A673 (cell line): ENCODE measurements at regions of chr5 and their contacts with region 1.

Region 1: GRCh38 chr5:123423278-123424149 is at the start of gene CEP120:
- DNase-seq: peak; percentile 100
- H3K4me3 ChIP-seq: peak within 1 kb of the TSS; percentile 86
- H3K27ac ChIP-seq: peak within 1 kb of the TSS; percentile 93
- H3K4me1 ChIP-seq: peaks cover 14% of the 10 kb centered on the region
- H3K27me3 ChIP-seq: no peaks in the 10 kb centered on the region
- CTCF ChIP-seq: peak; percentile 95
- total RNA-seq, gene CEP120: 25.5 and 25.7 TPM in 2 replicates

Region 2: DNA sequence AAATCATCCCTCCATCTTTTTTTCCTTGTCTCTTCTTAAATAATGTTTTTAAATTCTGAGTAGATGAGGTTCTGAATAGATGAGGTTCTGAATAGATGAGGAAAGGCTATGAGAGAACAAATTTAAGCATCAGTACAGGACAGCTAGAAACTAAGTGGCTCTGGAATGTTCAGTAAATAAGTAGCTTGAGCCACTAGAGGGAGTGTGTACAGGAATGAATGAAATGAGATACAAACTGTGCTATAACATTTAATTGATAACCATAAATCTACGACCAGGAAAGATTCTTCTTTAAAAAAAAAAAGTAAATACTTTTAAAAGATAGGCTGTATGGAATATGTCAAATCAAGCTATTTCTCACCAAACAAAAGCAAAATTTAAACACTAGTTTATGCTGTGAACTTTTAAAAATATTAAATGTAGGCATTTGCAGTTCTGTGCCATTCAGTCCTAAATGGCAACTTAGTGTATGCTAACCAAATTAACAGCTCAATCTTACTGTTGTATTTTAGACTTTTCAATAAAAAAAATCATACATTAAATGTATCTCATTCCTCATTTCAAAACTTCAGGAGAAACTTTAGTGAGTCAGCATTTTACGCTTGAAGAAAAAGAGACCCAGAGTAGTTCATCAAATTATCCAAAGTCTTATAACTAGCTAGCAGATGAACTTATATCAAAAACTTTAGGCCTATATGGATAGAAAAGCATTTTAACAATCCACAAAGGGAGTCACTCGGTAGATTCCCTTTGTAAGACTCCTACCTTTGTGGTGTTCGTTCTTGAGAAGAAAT is 719.1 kb before region 1 on chr5:
- CTCF ChIA-PET with region 1: no interaction called
- POLR2A ChIA-PET with region 1: no interaction called
- intact Hi-C with region 1: no loop called
- DNase-seq: peak; percentile 70
- H3K4me3 ChIP-seq: no peak overlapping the region
- H3K27ac ChIP-seq: no peak overlapping the region
- H3K4me1 ChIP-seq: peaks cover 3% of the 10 kb centered on the region
- H3K27me3 ChIP-seq: no peaks in the 10 kb centered on the region
- CTCF ChIP-seq: peak; percentile 68

Region 3: DNA sequence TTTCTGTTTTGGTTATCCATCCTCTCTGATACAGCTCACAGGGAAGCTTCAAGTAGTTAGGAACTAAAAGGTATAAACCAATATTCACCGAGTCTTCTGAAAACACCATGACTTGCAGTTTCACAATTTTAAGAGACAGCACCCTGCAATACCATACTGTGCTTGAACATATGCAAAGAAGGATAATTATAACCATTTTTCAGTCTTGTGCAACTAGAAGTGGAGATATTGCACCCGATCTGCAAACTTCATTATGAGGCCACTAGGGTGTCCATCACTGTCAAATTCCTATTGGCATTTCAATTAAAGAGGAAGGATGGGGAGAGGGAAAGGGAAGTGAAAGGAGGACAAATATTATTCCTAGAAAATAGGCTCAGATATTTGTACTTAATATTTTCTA is 32.1 kb after region 1 on chr5:
- CTCF ChIA-PET with region 1: interaction called, 11 read pairs
- POLR2A ChIA-PET with region 1: interaction called, 3 read pairs
- intact Hi-C with region 1: loop called (anchors 1 kb)
- DNase-seq: peak; percentile 44
- H3K4me3 ChIP-seq: no peak overlapping the region
- H3K27ac ChIP-seq: peak overlapping the region; percentile 68
- H3K4me1 ChIP-seq: peaks cover 56% of the 10 kb centered on the region
- H3K27me3 ChIP-seq: no peaks in the 10 kb centered on the region
- CTCF ChIP-seq: peak; percentile 50

Region 4: DNA sequence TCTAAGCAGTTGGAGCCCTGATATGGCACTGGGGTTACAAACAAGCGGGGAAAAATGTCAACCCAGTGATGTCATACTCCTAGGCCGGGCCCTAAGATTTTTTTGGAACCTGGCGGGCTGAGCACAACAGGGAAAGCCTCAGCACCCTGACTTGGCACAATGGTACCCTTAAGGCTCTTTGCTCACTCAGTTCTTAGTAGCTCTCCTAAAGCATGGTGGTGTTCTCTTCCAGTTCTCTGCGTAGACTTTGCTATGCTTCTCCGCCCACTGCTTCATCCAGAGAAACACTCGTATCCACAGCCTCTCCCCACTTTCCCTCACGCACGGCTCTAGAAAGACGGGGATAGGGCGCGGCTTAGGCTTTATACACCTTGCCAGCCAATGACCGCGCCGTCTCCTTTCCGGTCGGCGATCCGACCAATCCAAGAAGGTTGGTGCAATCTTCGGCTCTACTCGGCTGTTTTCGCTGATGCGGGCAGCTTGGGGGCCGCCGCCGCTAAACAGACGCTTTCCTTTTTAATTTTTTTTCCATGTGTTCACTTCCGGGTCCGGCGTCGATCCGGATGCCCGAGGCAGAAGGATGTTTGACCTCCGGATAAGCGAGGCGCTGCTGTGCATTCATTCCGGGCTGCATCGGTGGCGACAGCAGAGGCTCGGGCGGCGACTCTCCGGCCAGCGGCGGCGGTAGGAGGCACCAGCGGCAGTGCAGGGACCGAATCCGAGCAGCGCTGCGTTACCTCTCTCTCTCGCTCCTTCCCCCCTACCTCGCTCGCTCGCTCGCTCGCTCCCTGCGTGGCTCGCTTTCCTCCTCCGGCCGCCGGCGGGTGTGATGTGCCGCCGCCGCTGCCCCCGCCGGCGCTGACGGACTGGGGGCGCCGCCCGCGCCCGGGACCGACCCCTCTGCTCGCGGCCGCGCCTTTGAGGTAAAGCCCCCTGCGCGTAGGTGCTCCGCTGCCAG is 88.4 kb after region 1 on chr5 and contains the start of gene CSNK1G3:
- CTCF ChIA-PET with region 1: interaction called, 10 read pairs
- POLR2A ChIA-PET with region 1: no interaction called
- intact Hi-C with region 1: loop called (anchors 5 kb)
- DNase-seq: peak; percentile 98
- H3K4me3 ChIP-seq: peak within 1 kb of the TSS; percentile 79
- H3K27ac ChIP-seq: peak within 1 kb of the TSS; percentile 92
- H3K4me1 ChIP-seq: peaks cover 16% of the 10 kb centered on the region
- H3K27me3 ChIP-seq: no peaks in the 10 kb centered on the region
- CTCF ChIP-seq: no peak
- total RNA-seq, gene CSNK1G3: 42.1 and 43.1 TPM in 2 replicates

Region 5: DNA sequence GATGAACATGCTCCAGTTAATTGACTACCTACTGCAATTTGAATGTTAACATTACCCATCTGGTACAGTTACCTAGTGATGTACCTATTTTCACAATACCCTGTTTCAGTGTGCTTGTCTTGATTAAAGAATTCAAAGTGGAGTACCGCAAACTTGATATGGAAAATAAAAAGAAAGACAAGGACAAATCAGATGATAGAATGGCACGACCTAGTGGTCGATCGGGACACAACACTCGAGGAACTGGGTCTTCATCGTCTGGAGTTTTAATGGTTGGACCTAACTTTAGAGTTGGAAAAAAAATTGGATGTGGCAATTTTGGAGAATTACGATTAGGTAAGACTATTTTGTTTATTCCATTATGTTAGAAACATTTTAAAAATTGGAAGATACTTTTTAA is 122.0 kb after region 1 on chr5:
- CTCF ChIA-PET with region 1: no interaction called
- POLR2A ChIA-PET with region 1: no interaction called
- intact Hi-C with region 1: loop called (anchors 1 kb)
- DNase-seq: peak; percentile 61
- H3K4me3 ChIP-seq: no peak overlapping the region
- H3K27ac ChIP-seq: no peak overlapping the region
- H3K4me1 ChIP-seq: no peaks in the 10 kb centered on the region
- H3K27me3 ChIP-seq: no peaks in the 10 kb centered on the region
- CTCF ChIP-seq: peak; percentile 78

Region 6: DNA sequence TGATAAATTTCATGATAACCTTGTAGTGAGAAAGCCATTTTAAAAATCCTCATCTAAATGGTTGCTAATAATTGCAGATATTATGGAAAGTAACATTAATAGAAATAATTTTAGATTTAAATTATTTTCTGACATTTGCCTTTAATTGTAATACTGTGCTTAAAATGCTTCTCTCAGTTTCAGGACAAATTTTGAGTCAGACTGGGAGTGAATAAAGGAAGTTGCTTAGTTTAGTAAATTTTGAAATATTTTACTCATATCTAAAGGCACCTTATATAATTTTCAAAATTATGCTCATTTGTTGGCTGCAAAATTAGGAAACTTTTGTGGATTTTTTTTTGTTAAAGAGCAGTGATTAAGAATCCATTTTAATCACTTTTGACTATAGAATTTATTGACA is 182.3 kb after region 1 on chr5:
- CTCF ChIA-PET with region 1: interaction called, 8 read pairs
- POLR2A ChIA-PET with region 1: no interaction called
- intact Hi-C with region 1: loop called (anchors 10 kb)
- DNase-seq: no peak
- H3K4me3 ChIP-seq: no peak overlapping the region
- H3K27ac ChIP-seq: no peak overlapping the region
- H3K4me1 ChIP-seq: no peaks in the 10 kb centered on the region
- H3K27me3 ChIP-seq: no peaks in the 10 kb centered on the region
- CTCF ChIP-seq: no peak